Heart right ventricle (tissue), 16 donors: ENCODE measurements at regions of chr9 and their contacts with region 1.

Region 1: GRCh38 chr9:27333241-27334052 is 36.5 kb upstream of the EQTN start:
- DNase-seq: peak in 1 of 2 donors; percentile 62
- ATAC-seq: peak; percentile 83 to 94 (median 88)
- H3K4me3 ChIP-seq: no peak overlapping the region
- H3K27ac ChIP-seq: no peak overlapping the region
- H3K4me1 ChIP-seq: peaks cover 3 to 24% (median 16%) of the 10 kb centered on the region in 9 donors
- H3K27me3 ChIP-seq: no peaks in the 10 kb centered on the region
- CTCF ChIP-seq: peak; percentile 83 to 95 (median 90)

Region 2: DNA sequence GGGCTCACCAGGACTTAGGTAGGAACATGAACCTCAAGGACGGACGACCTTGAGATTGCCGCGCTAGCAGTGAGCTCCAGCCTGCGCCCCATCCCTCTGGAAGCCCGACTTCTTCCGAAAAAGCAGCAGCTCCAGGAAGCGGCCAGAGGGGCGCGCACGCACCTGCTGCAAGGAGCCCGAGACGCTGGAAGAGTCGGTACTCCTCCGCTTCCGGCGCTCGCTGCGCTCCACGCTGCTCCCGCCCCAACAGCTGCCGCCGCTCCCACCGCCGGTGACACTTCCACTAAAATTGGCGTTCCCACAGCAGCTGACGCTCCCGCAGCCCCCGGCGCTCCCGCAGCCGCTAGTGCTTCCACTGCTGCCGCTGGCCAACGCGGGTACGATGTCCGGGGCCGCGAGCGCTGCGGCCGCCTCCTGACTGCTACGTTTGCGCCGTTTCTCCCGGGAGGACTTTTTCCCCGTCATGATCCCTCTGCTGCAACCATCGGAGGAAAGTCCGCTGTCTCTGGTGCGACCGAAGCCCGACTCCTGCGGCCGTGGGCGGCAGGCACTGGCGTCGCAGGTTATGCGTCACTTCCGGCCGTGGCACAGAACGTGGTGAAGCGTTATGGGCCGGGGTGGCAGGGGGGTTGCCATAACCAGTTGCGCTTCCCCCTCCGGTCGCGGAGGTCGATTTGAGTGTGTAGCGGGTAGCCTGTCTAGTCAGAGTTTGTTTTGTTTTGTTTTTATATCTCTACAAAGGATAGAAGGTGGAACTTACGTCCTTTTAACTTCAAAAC is 441.0 kb before region 1 on chr9 and contains the start of gene CAAP1:
- intact Hi-C with region 1: loop called in 1 of 10 experiments (anchors 5 kb)
- DNase-seq: peak; percentile 92 to 94
- ATAC-seq: peak; percentile 99 to 100 (median 99)
- H3K4me3 ChIP-seq: peak within 1 kb of the TSS; percentile 66 to 99 (median 94)
- H3K27ac ChIP-seq: peak within 1 kb of the TSS; percentile 75 to 100 (median 96)
- H3K4me1 ChIP-seq: peaks cover 0 to 36% (median 22%) of the 10 kb centered on the region in 9 donors
- H3K27me3 ChIP-seq: no peaks in the 10 kb centered on the region
- CTCF ChIP-seq: peak in 6 of 9 donors; percentile 28 to 61 (median 50)
- total RNA-seq, gene CAAP1: 4.1 to 9.9 (median 7.6) TPM

Region 3: DNA sequence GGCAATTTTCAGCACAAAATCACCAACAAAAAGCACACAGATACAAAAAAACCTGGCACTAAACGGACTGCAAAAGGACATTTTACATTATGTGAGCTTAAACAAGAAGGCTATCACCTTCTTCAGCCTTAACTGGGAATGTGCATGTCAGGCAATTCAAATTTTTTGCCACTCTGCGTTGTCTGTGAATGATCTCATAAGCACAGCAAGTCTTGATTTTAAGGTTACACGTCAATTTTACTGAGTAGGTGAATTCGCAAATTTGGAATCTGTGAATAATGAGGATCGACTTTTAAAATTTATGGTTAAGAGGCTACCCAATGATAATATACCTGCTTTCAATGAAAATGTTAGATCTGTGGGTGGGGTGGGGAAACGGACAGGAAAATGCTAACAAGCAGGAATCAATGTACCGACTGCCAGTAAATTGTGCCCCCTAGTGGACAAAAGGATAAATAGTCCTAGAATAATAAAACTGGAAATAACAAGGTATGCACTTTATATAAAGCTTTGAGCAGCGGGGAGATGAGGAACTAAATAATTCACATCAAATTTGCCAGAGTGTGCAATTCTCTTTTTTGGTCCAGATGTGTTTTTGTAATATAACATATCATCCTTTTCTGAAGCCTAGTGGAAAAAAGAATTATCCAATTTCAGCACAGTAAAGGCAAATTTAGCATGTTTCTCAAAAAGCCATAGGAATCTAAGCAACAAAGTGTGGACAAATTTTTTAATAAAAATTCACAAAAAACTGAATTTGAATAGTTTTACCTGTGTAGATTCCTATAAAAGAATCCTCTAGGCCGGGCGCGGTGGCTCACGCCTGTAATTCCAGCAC is 57.0 kb before region 1 on chr9:
- intact Hi-C with region 1: loop called in 1 of 10 experiments (anchors 10 kb)
- DNase-seq: peak in 1 of 2 donors; percentile 16
- ATAC-seq: peak in 5 of 8 donors; percentile 44 to 61 (median 51)
- H3K4me3 ChIP-seq: peak overlapping the region in 6 of 10 donors; percentile 16 to 29 (median 22)
- H3K27ac ChIP-seq: no peak overlapping the region
- H3K4me1 ChIP-seq: peaks cover 0 to 16% (median 4%) of the 10 kb centered on the region in 9 donors
- H3K27me3 ChIP-seq: no peaks in the 10 kb centered on the region
- CTCF ChIP-seq: peak; percentile 67 to 90 (median 81)

Region 4: DNA sequence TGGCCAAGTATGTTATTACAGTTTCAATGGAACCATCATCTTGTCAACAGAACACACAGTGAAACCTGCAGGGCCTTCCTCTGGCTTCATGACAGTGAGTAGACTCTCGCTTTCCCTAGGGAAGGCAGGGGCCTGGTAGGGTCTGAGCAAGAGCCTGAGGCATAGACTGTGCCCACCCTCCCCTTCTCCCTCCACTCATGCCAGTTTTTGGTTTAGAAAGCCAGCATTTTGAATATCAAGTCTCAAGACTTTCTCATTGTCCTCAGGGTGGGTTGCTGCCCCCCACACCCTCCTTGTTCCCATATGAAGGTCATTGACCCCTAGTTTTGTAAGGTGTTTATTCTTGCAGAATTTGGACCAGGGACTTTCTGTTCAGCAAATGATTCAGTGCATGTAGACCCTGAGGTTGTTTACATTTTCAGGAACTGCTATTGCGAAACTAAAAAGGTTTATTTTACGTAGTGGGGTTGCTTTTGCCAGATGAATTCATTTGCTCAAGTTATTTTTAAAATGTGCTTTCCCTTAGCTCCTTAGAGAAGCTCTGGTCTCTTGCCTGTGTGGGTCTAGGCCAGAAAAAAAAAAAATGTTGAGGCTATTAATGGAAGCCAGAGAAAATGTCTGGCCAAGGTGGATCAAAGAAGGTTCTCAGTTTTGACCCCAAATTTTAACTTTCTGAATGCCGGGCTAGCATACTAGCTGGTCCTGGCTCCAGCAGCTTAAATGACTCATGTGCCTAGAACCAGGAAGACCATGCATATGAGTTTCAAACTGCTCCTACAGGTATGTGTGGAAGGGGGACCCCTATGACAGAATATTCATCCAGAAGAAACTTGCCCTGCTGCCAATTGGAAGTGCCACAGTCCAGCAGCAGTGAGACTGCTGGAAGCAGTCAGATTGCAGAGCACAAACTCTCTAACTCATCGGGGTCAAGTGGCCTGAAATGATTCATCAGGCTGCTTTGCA is 206.3 kb after region 1 on chr9:
- intact Hi-C with region 1: loop called in 3 of 10 experiments (anchors 5 kb)
- DNase-seq: no peak
- ATAC-seq: peak; percentile 75 to 88 (median 82)
- H3K4me3 ChIP-seq: no peak overlapping the region
- H3K27ac ChIP-seq: peak overlapping the region; percentile 9 to 60 (median 51)
- H3K4me1 ChIP-seq: peaks cover 8 to 27% (median 17%) of the 10 kb centered on the region in 9 donors
- H3K27me3 ChIP-seq: no peaks in the 10 kb centered on the region
- CTCF ChIP-seq: no peak

Region 5: GRCh38 chr9:27548055-27548741 is 214.8 kb after region 1 on chr9:
- intact Hi-C with region 1: loop called in 9 of 10 experiments (anchors 1 to 5 kb)
- DNase-seq: no peak
- ATAC-seq: peak; percentile 67 to 91 (median 81)
- H3K4me3 ChIP-seq: no peak overlapping the region
- H3K27ac ChIP-seq: no peak overlapping the region
- H3K4me1 ChIP-seq: peaks cover 0 to 13% (median under 1%) of the 10 kb centered on the region in 9 donors
- H3K27me3 ChIP-seq: no peaks in the 10 kb centered on the region
- CTCF ChIP-seq: peak; percentile 9 to 69 (median 54)